ENCODE measurements at regions of chr12 and their contacts with region 1.

Region 1: GRCh38 chr12:123365025-123365917 is 624 bp upstream of the SBNO1 start:
- DNase-seq: peak; percentile 95 to 100 (median 97)
- ATAC-seq: peak; percentile 75
- H3K4me3 ChIP-seq: peak overlapping the region; percentile 93
- H3K4me3 Mint-ChIP-seq: peak overlapping the region; percentile 89
- H3K27ac ChIP-seq: peak overlapping the region; percentile 93 to 96
- H3K27ac Mint-ChIP-seq: peak overlapping the region; percentile 88
- H3K4me1 ChIP-seq: peaks cover 47% of the 10 kb centered on the region
- H3K4me1 Mint-ChIP-seq: peaks cover 24% of the 10 kb centered on the region
- H3K27me3 ChIP-seq: no peaks in the 10 kb centered on the region
- H3K27me3 Mint-ChIP-seq: no peaks in the 10 kb centered on the region
- CTCF ChIP-seq: peak; percentile 85

Region 2: GRCh38 chr12:122471324-122472226 is 893.7 kb before region 1 on chr12:
- CTCF ChIA-PET with region 1: no interaction called
- POLR2A ChIA-PET with region 1: no interaction called
- intact Hi-C with region 1: no loop called
- DNase-seq: peak in 5 of 14 experiments; percentile 4 to 81 (median 73)
- ATAC-seq: peak; percentile 85
- H3K4me3 ChIP-seq: no peak overlapping the region
- H3K4me3 Mint-ChIP-seq: no peak overlapping the region
- H3K27ac ChIP-seq: no peak overlapping the region
- H3K27ac Mint-ChIP-seq: peak overlapping the region; percentile 2
- H3K4me1 ChIP-seq: no peaks in the 10 kb centered on the region
- H3K4me1 Mint-ChIP-seq: peaks cover 9% of the 10 kb centered on the region
- H3K27me3 ChIP-seq: no peaks in the 10 kb centered on the region
- H3K27me3 Mint-ChIP-seq: no peaks in the 10 kb centered on the region
- CTCF ChIP-seq: peak; percentile 91

Region 3: GRCh38 chr12:122526683-122527477 is 838.4 kb before region 1 on chr12 and contains the starts of genes KNTC1 and RSRC2:
- CTCF ChIA-PET with region 1: no interaction called
- POLR2A ChIA-PET with region 1: interaction called, 6 read pairs
- intact Hi-C with region 1: loop called in 1 of 2 experiments (anchors 5 kb)
- DNase-seq: peak; percentile 93 to 100 (median 96)
- ATAC-seq: peak; percentile 90
- H3K4me3 ChIP-seq: peak within 1 kb of the TSS; percentile 97
- H3K4me3 Mint-ChIP-seq: no peak within 1 kb of the TSS
- H3K27ac ChIP-seq: peak within 1 kb of the TSS; percentile 98 to 99
- H3K27ac Mint-ChIP-seq: no peak within 1 kb of the TSS
- H3K4me1 ChIP-seq: peaks cover 21% of the 10 kb centered on the region
- H3K4me1 Mint-ChIP-seq: peaks cover 36% of the 10 kb centered on the region
- H3K27me3 ChIP-seq: no peaks in the 10 kb centered on the region
- H3K27me3 Mint-ChIP-seq: no peaks in the 10 kb centered on the region
- CTCF ChIP-seq: no peak
- total RNA-seq, gene KNTC1: 23.3 to 23.8 TPM
- total RNA-seq, gene RSRC2: 339 to 341 TPM

Region 4: DNA sequence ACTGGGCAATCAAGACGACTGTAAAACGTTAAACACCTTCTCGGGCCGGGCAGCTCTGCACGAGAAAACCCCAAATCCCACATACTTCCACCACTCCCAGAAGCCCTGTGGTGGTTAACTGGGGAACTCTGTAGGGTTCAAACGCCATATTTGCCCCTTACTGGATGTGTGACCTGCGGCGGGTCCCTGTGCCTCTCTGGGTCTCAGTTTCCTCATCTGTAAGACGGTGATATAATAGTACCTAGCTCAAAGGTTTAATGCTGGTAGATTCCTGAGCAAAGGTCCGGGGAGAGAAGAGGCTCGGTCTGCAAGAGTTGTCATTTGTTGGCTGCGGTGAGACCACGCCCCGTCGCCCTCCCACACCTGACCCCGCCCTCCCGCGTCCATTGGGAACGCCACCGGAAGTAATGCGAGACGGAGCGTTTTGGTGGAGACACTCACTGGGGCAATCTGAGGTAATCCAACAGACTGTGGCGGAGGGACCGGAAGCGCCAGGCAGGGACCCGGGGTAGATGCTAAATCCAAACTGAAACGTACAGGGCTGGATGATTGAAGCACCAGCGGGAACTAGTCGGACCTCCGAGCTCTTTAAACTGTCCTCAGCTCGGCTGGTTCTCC is 390.9 kb before region 1 on chr12:
- CTCF ChIA-PET with region 1: no interaction called
- POLR2A ChIA-PET with region 1: interaction called, 16 read pairs
- intact Hi-C with region 1: loop called in 1 of 2 experiments (anchors 5 kb)
- DNase-seq: peak; percentile 97 to 99 (median 99)
- ATAC-seq: peak; percentile 81
- H3K4me3 ChIP-seq: peak overlapping the region; percentile 97
- H3K4me3 Mint-ChIP-seq: peak overlapping the region; percentile 98
- H3K27ac ChIP-seq: peak overlapping the region; percentile 99 to 100
- H3K27ac Mint-ChIP-seq: peak overlapping the region; percentile 98
- H3K4me1 ChIP-seq: peaks cover 49% of the 10 kb centered on the region
- H3K4me1 Mint-ChIP-seq: peaks cover 29% of the 10 kb centered on the region
- H3K27me3 ChIP-seq: no peaks in the 10 kb centered on the region
- H3K27me3 Mint-ChIP-seq: no peaks in the 10 kb centered on the region
- CTCF ChIP-seq: no peak

Region 5: GRCh38 chr12:123329799-123330198 is 35.5 kb before region 1 on chr12:
- CTCF ChIA-PET with region 1: interaction called, 6 read pairs
- POLR2A ChIA-PET with region 1: no interaction called
- intact Hi-C with region 1: loop called in 1 of 2 experiments (anchors 5 kb)
- DNase-seq: no peak
- ATAC-seq: no peak
- H3K4me3 ChIP-seq: no peak overlapping the region
- H3K4me3 Mint-ChIP-seq: no peak overlapping the region
- H3K27ac ChIP-seq: no peak overlapping the region
- H3K27ac Mint-ChIP-seq: no peak overlapping the region
- H3K4me1 ChIP-seq: no peaks in the 10 kb centered on the region
- H3K4me1 Mint-ChIP-seq: no peaks in the 10 kb centered on the region
- H3K27me3 ChIP-seq: no peaks in the 10 kb centered on the region
- H3K27me3 Mint-ChIP-seq: no peaks in the 10 kb centered on the region
- CTCF ChIP-seq: no peak

Region 6: DNA sequence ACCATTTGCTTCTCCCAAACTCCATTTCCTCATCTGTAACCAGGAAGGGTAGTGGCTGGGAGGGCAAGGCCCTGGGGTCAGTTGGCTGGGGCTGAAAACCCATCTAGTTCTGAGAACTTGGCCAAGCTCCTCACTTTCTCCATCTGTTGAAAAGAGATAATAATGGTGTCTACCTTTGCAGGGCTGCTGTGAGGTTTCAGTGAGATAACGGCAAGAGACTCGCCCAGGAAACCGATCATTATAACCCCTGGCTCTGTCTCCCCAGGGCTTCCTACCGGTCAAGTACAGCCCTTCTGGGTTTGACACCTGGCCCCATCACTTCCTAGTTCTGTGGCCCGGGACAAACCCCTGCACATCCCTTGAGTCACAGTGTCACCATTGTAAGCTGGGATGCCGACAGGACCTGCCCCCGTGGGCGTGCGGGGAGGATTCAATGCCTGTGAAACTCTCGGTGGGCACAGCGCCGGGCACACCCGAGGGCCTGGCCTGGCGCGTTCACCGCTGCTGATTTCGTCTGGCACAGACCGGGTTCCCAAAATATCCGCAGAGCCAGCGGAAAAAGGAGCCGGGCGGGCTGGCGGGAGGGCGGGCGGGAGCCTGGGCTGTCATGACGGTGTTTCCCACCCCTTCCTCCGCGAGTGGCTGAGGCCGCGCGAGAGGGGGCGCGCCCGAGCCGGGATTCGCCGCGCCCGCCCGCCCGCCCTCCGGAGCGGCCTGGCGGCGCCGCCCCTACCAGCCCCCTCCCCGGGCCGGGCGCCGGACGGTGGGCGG is 23.1 kb after region 1 on chr12:
- CTCF ChIA-PET with region 1: interaction called, 29 read pairs
- POLR2A ChIA-PET with region 1: interaction called, 52 read pairs
- intact Hi-C with region 1: loop called (anchors 1 to 2 kb)
- DNase-seq: peak; percentile 34 to 88 (median 67)
- ATAC-seq: peak; percentile 61
- H3K4me3 ChIP-seq: peak overlapping the region; percentile 87
- H3K4me3 Mint-ChIP-seq: peak overlapping the region; percentile 91
- H3K27ac ChIP-seq: peak overlapping the region; percentile 53 to 76
- H3K27ac Mint-ChIP-seq: peak overlapping the region; percentile 73
- H3K4me1 ChIP-seq: peaks cover 58% of the 10 kb centered on the region
- H3K4me1 Mint-ChIP-seq: peaks cover 52% of the 10 kb centered on the region
- H3K27me3 ChIP-seq: no peaks in the 10 kb centered on the region
- H3K27me3 Mint-ChIP-seq: no peaks in the 10 kb centered on the region
- CTCF ChIP-seq: no peak

Region 7: DNA sequence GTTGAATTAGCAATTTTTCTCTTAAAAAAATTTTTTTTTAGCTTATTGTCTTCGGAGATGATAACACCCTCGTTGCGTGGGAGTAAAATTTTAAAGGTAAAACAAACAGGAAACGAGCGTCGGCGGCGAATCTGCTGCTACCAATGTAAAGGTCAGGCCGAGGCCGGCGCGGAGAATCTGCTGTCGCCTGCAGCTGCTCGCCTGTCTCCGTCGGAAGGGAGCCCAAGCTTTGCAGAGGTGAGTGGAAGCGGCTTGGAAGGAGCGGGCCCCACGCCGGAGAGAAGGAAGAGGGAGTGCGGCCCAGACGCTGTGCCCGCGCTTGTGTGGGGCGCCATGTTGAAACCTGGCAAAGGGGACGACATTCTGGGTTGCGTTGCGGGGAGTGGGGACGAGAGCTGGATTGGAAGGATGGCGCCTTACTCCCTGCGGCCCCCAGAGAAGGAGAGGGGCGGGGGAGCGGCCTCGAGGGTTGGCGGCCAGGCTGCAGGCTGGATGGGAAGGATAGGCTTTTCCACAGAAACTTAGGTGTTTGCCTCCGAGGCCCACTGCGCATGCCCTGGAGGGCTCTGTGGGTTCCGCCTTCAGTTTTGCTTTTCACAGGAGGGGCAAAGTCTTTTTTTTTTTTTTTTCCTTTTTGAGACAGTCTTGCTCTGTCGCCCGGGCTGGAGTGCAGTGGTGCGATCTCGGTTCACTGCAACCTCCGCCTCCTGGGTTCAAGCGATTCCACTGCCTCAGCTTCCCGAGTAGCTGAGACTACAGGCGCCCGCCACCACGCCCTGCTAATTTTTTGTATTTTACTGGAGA is 92.9 kb after region 1 on chr12 and contains the start of gene SNRNP35:
- CTCF ChIA-PET with region 1: interaction called, 8 read pairs
- POLR2A ChIA-PET with region 1: interaction called, 41 read pairs
- intact Hi-C with region 1: loop called in 1 of 2 experiments (anchors 1 kb)
- DNase-seq: peak; percentile 73 to 93 (median 84)
- ATAC-seq: peak; percentile 77
- H3K4me3 ChIP-seq: peak within 1 kb of the TSS; percentile 93
- H3K4me3 Mint-ChIP-seq: peak within 1 kb of the TSS; percentile 100
- H3K27ac ChIP-seq: peak within 1 kb of the TSS; percentile 98 to 100
- H3K27ac Mint-ChIP-seq: peak within 1 kb of the TSS; percentile 100
- H3K4me1 ChIP-seq: peaks cover 38% of the 10 kb centered on the region
- H3K4me1 Mint-ChIP-seq: peaks cover 34% of the 10 kb centered on the region
- H3K27me3 ChIP-seq: no peaks in the 10 kb centered on the region
- H3K27me3 Mint-ChIP-seq: no peaks in the 10 kb centered on the region
- CTCF ChIP-seq: no peak
- total RNA-seq, gene SNRNP35: 26.2 to 28.6 TPM

Region 8: GRCh38 chr12:123601602-123602489 is 236.6 kb after region 1 on chr12 and contains the start of gene DDX55:
- CTCF ChIA-PET with region 1: interaction called, 11 read pairs
- POLR2A ChIA-PET with region 1: interaction called, 16 read pairs
- intact Hi-C with region 1: loop called in 1 of 2 experiments (anchors 5 kb)
- DNase-seq: peak; percentile 78 to 95 (median 84)
- ATAC-seq: peak; percentile 93
- H3K4me3 ChIP-seq: peak within 1 kb of the TSS; percentile 98
- H3K4me3 Mint-ChIP-seq: peak within 1 kb of the TSS; percentile 98
- H3K27ac ChIP-seq: peak within 1 kb of the TSS; percentile 85 to 89
- H3K27ac Mint-ChIP-seq: peak within 1 kb of the TSS; percentile 76
- H3K4me1 ChIP-seq: peaks cover 27% of the 10 kb centered on the region
- H3K4me1 Mint-ChIP-seq: peaks cover 33% of the 10 kb centered on the region
- H3K27me3 ChIP-seq: no peaks in the 10 kb centered on the region
- H3K27me3 Mint-ChIP-seq: no peaks in the 10 kb centered on the region
- CTCF ChIP-seq: peak; percentile 54
- total RNA-seq, gene DDX55: 33.3 to 37.1 TPM

Region 9: DNA sequence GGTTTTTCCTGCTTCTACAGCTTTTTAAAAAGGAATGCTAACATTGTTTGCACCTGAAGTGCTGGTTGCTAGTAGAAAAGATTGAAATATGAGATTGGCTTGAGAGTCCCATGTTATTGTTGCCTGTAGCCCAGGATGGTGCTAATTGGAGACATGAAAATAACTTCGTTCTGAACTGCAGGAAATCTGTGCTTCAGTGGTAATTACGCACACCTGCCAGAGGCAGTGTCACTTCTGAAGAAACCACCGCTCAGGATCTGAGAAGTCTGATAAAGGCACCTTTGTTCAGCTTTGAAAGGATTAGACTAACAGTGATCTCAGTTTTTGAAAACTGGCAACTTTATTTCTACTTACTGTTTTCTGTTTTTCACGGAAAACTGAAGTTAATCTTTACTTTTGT is 331.4 kb after region 1 on chr12:
- CTCF ChIA-PET with region 1: no interaction called
- POLR2A ChIA-PET with region 1: no interaction called
- intact Hi-C with region 1: no loop called
- DNase-seq: no peak
- ATAC-seq: peak; percentile 56
- H3K4me3 ChIP-seq: no peak overlapping the region
- H3K4me3 Mint-ChIP-seq: no peak overlapping the region
- H3K27ac ChIP-seq: no peak overlapping the region
- H3K27ac Mint-ChIP-seq: no peak overlapping the region
- H3K4me1 ChIP-seq: no peaks in the 10 kb centered on the region
- H3K4me1 Mint-ChIP-seq: no peaks in the 10 kb centered on the region
- H3K27me3 ChIP-seq: no peaks in the 10 kb centered on the region
- H3K27me3 Mint-ChIP-seq: no peaks in the 10 kb centered on the region
- CTCF ChIP-seq: no peak